Gastrocnemius medialis (tissue), 4 donors: ENCODE measurements at regions of chr11 and their contacts with region 1.

Region 1: DNA sequence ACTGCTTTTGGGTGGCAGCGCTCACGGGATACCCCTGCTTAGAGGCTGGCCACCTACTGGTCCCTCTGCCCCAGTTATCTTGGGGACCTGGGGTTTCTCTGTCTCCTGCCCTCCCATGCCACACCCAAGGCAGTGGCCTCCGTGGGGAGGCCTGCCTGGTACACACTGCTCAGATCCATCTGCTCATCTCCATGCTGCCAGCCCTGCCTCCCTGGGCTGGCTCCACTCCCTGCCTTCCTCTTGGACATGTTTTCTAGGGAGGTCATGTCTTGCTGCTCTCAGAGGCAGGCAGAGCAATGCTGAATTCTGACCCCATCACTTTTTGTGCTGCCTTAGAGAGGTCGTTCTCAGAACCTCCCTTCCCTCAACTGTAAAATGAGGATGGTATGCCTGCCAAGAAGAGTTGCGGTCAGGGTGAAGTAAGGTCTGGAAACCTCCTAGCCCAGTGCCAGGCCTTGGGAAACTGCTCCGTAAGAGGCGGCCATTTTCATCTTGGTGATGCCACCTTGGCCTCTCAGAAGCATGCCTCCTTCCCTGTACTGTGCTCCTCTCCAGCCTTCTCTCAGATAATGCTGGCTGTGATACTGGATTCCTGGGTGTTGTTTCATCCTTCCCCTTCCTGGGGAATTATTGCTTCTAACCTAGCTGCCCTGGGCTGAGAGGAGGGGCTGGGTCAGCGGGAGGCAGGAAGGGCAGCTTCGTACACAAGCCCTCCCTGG is 186.4 kb upstream of the ZBED5 start:
- DNase-seq: no peak
- ATAC-seq: peak; percentile 21 to 27
- H3K4me3 ChIP-seq: no peak overlapping the region
- H3K27ac ChIP-seq: no peak overlapping the region
- H3K4me1 ChIP-seq: peaks cover 0 to 1% of the 10 kb centered on the region in 2 donors
- H3K27me3 ChIP-seq: no peaks in the 10 kb centered on the region
- CTCF ChIP-seq: no peak
- POLR2A ChIP-seq: no peak

Region 2: GRCh38 chr11:11065396-11065795 is 21.1 kb after region 1 on chr11:
- in situ Hi-C with region 1: no loop called
- intact Hi-C with region 1: no loop called
- DNase-seq: no peak
- ATAC-seq: no peak
- H3K4me3 ChIP-seq: no peak overlapping the region
- H3K27ac ChIP-seq: no peak overlapping the region
- H3K4me1 ChIP-seq: peaks cover 2 to 9% of the 10 kb centered on the region in 2 donors
- H3K27me3 ChIP-seq: no peaks in the 10 kb centered on the region
- CTCF ChIP-seq: no peak
- POLR2A ChIP-seq: no peak

Region 3: DNA sequence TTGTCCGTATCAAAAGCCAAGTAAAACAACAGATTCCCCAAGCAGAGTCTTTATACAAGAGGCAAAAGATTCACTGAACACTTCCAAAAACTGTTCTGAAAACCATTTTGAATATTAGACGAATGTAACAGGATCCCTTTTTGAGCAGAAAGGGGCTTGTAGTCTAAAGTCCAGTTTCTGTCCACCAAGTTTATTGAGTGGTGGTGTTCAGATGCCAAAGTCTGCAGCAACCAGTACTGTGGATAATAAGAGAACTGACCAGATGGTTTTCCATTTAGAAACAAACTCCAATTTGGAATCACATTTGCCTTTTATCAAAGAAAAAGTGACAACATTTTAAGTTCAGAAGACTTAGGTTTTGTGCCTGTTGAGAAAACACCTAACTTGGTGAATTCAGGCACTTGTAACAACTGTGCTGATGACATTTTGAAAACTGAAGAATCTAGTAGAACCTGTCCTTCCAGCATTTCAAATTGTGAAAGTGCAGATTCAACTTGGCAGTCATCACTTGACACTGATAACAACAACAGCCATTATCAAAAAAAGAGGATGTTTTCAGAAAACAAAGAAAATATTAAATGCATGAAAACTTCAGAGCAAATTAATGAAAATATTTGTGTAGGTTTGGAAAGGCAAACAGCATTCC is 91.6 kb after region 1 on chr11:
- in situ Hi-C with region 1: no loop called
- intact Hi-C with region 1: no loop called
- DNase-seq: no peak
- ATAC-seq: no peak
- H3K4me3 ChIP-seq: no peak overlapping the region
- H3K27ac ChIP-seq: no peak overlapping the region
- H3K4me1 ChIP-seq: peaks cover 0 to 2% of the 10 kb centered on the region in 2 donors
- H3K27me3 ChIP-seq: no peaks in the 10 kb centered on the region
- CTCF ChIP-seq: no peak
- POLR2A ChIP-seq: no peak

Region 4: DNA sequence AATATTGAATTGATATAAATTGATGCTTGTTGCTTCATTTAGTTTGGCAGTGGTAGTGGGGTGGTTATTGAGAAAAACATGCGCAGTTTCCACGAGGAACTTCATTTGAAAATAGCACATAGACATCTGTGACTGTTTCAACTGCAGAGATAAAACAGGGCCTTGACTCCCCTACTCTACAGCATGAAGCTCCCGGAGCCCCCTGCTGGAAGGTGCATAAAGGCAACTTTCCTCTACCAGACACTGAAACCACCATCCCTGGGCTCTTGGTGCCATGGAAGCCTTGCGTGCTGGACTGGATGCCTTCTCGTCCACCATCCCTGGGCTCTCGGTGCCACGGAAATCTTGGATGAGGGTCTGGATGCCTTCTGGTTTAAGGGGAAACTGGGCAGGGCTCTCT is 112.9 kb after region 1 on chr11:
- in situ Hi-C with region 1: loop called in 1 of 4 experiments (anchors 10 kb)
- intact Hi-C with region 1: no loop called
- DNase-seq: no peak
- ATAC-seq: peak in 1 of 2 donors; percentile 77
- H3K4me3 ChIP-seq: no peak overlapping the region
- H3K27ac ChIP-seq: no peak overlapping the region
- H3K4me1 ChIP-seq: no peaks in the 10 kb centered on the region
- H3K27me3 ChIP-seq: no peaks in the 10 kb centered on the region
- CTCF ChIP-seq: peak in 4 of 5 experiments; percentile 22 to 51 (median 30)
- POLR2A ChIP-seq: no peak